Naive thymus-derived CD4-positive, alpha-beta T cell (primary cell): ENCODE measurements at regions of chr12 and their contacts with region 1.

Region 1: DNA sequence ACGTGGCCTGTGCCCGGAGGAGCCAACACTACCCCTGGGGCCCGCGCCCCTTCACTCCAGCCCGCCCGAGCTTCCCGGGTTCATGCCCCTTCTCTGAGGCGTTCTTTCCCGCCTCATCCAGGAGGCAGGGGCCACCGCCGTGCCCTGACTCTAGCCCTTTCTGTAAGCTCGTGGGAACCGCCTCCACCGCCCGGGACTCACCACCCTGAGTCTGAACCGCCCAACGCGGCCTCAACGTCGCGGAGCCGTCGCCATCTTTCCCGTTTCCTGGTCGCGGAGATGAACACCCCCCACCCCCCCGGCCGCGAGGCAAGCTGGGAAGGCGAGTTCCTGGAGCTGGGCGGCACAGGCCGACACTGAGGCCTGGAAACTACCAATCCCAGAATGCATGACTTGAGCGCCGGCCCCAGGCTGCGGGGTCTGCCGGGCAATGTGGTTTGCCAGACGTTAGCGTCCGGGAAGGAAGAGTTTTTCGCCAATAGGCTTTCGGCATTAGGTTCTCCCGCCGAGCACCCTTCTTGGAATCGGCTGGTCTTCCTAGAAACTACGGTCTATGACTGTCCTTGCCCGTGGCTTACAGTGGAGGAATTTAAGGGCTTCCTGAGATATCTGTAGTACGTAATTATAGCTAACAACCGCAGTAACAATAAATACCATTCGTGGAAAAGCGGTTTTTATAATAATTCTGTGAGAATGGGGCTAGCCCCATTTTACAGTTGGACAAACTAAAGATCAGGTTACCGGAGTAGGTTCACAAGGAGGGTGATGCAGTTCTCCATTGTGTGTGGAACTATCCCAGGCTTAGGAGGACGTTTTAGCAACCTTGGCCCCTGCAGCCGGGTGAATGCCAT is at the start of gene DDX23:
- DNase-seq: peak; percentile 73 to 93 (median 89)
- ATAC-seq: peak; percentile 98
- H3K4me3 ChIP-seq: peak within 1 kb of the TSS; percentile 96
- H3K4me3 Mint-ChIP-seq: peak within 1 kb of the TSS; percentile 89 to 99 (median 98)
- H3K27ac ChIP-seq: peak within 1 kb of the TSS; percentile 93
- H3K27ac Mint-ChIP-seq: peak within 1 kb of the TSS; percentile 89 to 100 (median 98)
- H3K4me1 ChIP-seq: peaks cover 18 to 24% of the 10 kb centered on the region in 2 donors
- H3K4me1 Mint-ChIP-seq: peaks cover 30 to 49% (median 43%) of the 10 kb centered on the region in 7 donors
- H3K27me3 ChIP-seq: no peaks in the 10 kb centered on the region
- H3K27me3 Mint-ChIP-seq: no peaks in the 10 kb centered on the region
- total RNA-seq, gene DDX23: 84.0 to 160 (median 127) TPM

Region 2: GRCh38 chr12:48631057-48631456 is 221.1 kb before region 1 on chr12:
- CTCF ChIA-PET with region 1: no interaction called
- POLR2A ChIA-PET with region 1: no interaction called
- intact Hi-C with region 1: no loop called
- DNase-seq: no peak
- ATAC-seq: no peak
- H3K4me3 ChIP-seq: no peak overlapping the region
- H3K4me3 Mint-ChIP-seq: no peak overlapping the region
- H3K27ac ChIP-seq: no peak overlapping the region
- H3K27ac Mint-ChIP-seq: no peak overlapping the region
- H3K4me1 ChIP-seq: no peaks in the 10 kb centered on the region
- H3K4me1 Mint-ChIP-seq: no peaks in the 10 kb centered on the region
- H3K27me3 ChIP-seq: no peaks in the 10 kb centered on the region
- H3K27me3 Mint-ChIP-seq: peaks cover 28 to 36% (median 29%) of the 10 kb centered on the region in 5 donors

Region 3: GRCh38 chr12:48681738-48682532 is 170.2 kb before region 1 on chr12 and contains the start of gene KANSL2:
- CTCF ChIA-PET with region 1: no interaction called
- POLR2A ChIA-PET with region 1: interaction called, 5 read pairs
- intact Hi-C with region 1: loop called (anchors 1 kb)
- DNase-seq: peak; percentile 79 to 98 (median 96)
- ATAC-seq: peak; percentile 97
- H3K4me3 ChIP-seq: peak within 1 kb of the TSS; percentile 88
- H3K4me3 Mint-ChIP-seq: peak within 1 kb of the TSS; percentile 93 to 99 (median 97)
- H3K27ac ChIP-seq: peak within 1 kb of the TSS; percentile 90
- H3K27ac Mint-ChIP-seq: peak within 1 kb of the TSS; percentile 97 to 99 (median 98)
- H3K4me1 ChIP-seq: peaks cover 30 to 38% of the 10 kb centered on the region in 2 donors
- H3K4me1 Mint-ChIP-seq: peaks cover 32 to 59% (median 53%) of the 10 kb centered on the region in 7 donors
- H3K27me3 ChIP-seq: no peaks in the 10 kb centered on the region
- H3K27me3 Mint-ChIP-seq: no peaks in the 10 kb centered on the region
- total RNA-seq, gene KANSL2: 37.5 to 117 (median 74.4) TPM

Region 4: GRCh38 chr12:48890657-48891418 is 38.7 kb after region 1 on chr12:
- CTCF ChIA-PET with region 1: interaction called, 78 read pairs
- POLR2A ChIA-PET with region 1: interaction called, 31 read pairs
- intact Hi-C with region 1: loop called (anchors 1 kb)
- DNase-seq: peak; percentile 51 to 79 (median 64)
- ATAC-seq: peak; percentile 97
- H3K4me3 ChIP-seq: no peak overlapping the region
- H3K4me3 Mint-ChIP-seq: peak overlapping the region in 4 of 10 donors; percentile 2 to 39 (median 16)
- H3K27ac ChIP-seq: no peak overlapping the region
- H3K27ac Mint-ChIP-seq: peak overlapping the region in 1 of 9 donors; percentile 65
- H3K4me1 ChIP-seq: peaks cover 8% of the 10 kb centered on the region in 2 donors
- H3K4me1 Mint-ChIP-seq: peaks cover 0 to 10% (median 0%) of the 10 kb centered on the region in 7 donors
- H3K27me3 ChIP-seq: peaks cover 0 to 4% of the 10 kb centered on the region in 2 donors
- H3K27me3 Mint-ChIP-seq: peaks cover 12 to 30% (median 15%) of the 10 kb centered on the region in 5 donors

Region 5: GRCh38 chr12:48936379-48936979 is 84.4 kb after region 1 on chr12:
- CTCF ChIA-PET with region 1: interaction called, 54 read pairs
- POLR2A ChIA-PET with region 1: interaction called, 15 read pairs
- intact Hi-C with region 1: loop called (anchors 1 kb)
- DNase-seq: peak; percentile 65 to 87 (median 77)
- ATAC-seq: peak; percentile 80
- H3K4me3 ChIP-seq: no peak overlapping the region
- H3K4me3 Mint-ChIP-seq: no peak overlapping the region
- H3K27ac ChIP-seq: no peak overlapping the region
- H3K27ac Mint-ChIP-seq: peak overlapping the region; percentile 1 to 85 (median 68)
- H3K4me1 ChIP-seq: peaks cover 6 to 34% of the 10 kb centered on the region in 2 donors
- H3K4me1 Mint-ChIP-seq: peaks cover 12 to 31% (median 16%) of the 10 kb centered on the region in 7 donors
- H3K27me3 ChIP-seq: no peaks in the 10 kb centered on the region
- H3K27me3 Mint-ChIP-seq: no peaks in the 10 kb centered on the region

Region 6: DNA sequence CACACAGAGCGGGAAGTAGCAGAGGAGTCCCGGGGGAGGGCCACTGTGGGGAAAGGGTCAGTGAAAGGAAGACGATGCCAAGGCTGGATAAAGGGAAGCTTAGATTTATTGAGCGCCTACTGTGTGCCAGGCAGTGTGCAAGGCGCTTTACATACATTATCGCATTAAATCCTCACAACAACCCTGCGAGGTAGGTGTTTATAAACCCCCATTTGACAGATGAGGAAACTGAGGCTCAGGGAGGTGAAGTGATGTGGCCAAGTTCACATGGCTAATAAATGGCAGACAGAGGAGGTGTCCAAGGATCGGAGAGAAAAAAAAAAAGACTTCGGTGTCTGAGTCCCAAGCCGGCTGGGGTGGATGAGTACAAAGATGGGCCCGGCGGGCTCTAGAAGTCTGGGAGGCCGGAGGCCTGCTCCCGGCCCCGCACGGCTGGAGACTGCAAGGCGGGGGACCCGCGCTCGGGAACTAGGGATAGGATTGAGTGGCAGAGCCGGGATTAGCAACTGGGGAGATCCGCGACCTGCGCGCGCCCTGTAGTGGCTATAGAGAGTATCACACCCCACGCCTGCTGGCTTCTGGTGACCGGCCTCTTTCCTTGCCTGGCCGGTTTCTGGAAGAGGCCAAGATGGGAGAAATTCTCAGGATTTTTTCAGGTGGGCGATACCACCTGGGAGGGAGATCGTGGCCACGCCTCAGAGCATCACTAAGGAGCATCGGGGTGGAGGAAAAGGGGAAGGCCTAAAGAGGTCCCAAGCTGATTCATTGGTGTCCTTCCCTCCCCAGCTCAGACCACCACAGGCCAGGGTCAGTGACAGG is 143.2 kb after region 1 on chr12:
- CTCF ChIA-PET with region 1: no interaction called
- POLR2A ChIA-PET with region 1: interaction called, 3 read pairs
- intact Hi-C with region 1: loop called in 1 of 2 experiments (anchors 1 kb)
- DNase-seq: peak in 3 of 9 donors; percentile 36 to 56 (median 54)
- ATAC-seq: peak; percentile 51
- H3K4me3 ChIP-seq: no peak overlapping the region
- H3K4me3 Mint-ChIP-seq: peak overlapping the region in 9 of 10 donors; percentile 15 to 81 (median 71)
- H3K27ac ChIP-seq: no peak overlapping the region
- H3K27ac Mint-ChIP-seq: peak overlapping the region in 2 of 9 donors; percentile 31 to 90
- H3K4me1 ChIP-seq: peaks cover 13 to 26% of the 10 kb centered on the region in 2 donors
- H3K4me1 Mint-ChIP-seq: peaks cover 24 to 39% (median 32%) of the 10 kb centered on the region in 7 donors
- H3K27me3 ChIP-seq: peaks cover 0 to 25% of the 10 kb centered on the region in 2 donors
- H3K27me3 Mint-ChIP-seq: peaks cover 48 to 75% (median 56%) of the 10 kb centered on the region in 5 donors

Region 7: DNA sequence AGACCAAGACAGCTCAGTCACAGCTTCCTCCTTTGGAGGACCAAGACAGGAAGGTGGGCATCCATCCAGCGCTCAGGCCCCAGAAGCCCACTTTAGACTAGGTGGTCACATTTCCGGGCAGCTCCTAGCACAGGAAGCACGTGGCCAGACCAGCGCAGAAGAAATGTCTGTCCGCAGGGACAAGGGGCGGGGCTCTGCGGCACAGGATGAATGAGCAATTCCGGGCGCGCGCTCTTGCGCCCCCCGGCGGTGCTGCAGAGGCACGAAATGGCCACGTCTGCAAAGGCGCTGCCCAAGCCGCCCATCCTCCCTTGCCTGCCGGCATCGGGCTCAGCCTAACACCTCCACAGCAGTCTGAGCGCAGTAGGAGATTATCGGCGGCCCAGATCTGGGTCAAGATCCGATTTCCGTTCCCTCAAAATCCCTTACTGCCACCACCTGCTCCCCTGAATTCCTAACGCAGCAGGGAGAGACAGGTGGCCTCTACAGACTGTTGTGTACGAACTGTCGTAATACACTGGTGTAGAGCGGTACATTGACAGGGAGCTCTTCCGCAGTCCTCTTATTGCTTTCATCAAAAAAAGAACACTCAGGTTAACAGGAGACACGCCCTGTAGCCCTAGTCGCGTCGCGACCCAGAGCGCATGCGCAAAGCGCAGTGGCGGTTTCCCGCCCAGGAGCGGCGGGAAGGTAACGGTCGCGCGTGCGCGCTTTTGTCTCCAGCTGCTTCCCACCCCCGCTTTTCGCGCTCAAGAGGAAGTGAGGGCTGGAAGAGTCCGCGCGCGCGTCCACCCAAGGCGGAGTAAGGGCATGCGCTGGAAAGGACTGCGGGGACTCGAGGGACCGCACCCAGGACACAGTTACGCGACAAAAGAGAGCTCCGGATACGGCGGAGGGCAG is 278.3 kb after region 1 on chr12:
- CTCF ChIA-PET with region 1: no interaction called
- POLR2A ChIA-PET with region 1: interaction called, 9 read pairs
- intact Hi-C with region 1: loop called (anchors 2 to 5 kb)
- DNase-seq: peak; percentile 87 to 95 (median 94)
- ATAC-seq: peak; percentile 77
- H3K4me3 ChIP-seq: peak overlapping the region; percentile 92
- H3K4me3 Mint-ChIP-seq: peak overlapping the region; percentile 95 to 99 (median 98)
- H3K27ac ChIP-seq: peak overlapping the region; percentile 95
- H3K27ac Mint-ChIP-seq: peak overlapping the region; percentile 97 to 99 (median 99)
- H3K4me1 ChIP-seq: peaks cover 24 to 27% of the 10 kb centered on the region in 2 donors
- H3K4me1 Mint-ChIP-seq: peaks cover 24 to 61% (median 55%) of the 10 kb centered on the region in 7 donors
- H3K27me3 ChIP-seq: no peaks in the 10 kb centered on the region
- H3K27me3 Mint-ChIP-seq: peaks cover 0 to 7% (median 0%) of the 10 kb centered on the region in 5 donors

Region 8: GRCh38 chr12:49707128-49707811 is 855.2 kb after region 1 on chr12 and contains the start of gene FMNL3:
- CTCF ChIA-PET with region 1: no interaction called
- POLR2A ChIA-PET with region 1: no interaction called
- intact Hi-C with region 1: no loop called
- DNase-seq: peak; percentile 97 to 100 (median 98)
- ATAC-seq: peak; percentile 97
- H3K4me3 ChIP-seq: peak within 1 kb of the TSS; percentile 78
- H3K4me3 Mint-ChIP-seq: peak within 1 kb of the TSS; percentile 78 to 96 (median 92)
- H3K27ac ChIP-seq: peak within 1 kb of the TSS; percentile 92
- H3K27ac Mint-ChIP-seq: peak within 1 kb of the TSS; percentile 72 to 94 (median 89)
- H3K4me1 ChIP-seq: peaks cover 11 to 32% of the 10 kb centered on the region in 2 donors
- H3K4me1 Mint-ChIP-seq: peaks cover 38 to 49% (median 46%) of the 10 kb centered on the region in 7 donors
- H3K27me3 ChIP-seq: no peaks in the 10 kb centered on the region
- H3K27me3 Mint-ChIP-seq: peaks cover 0 to 29% (median 0%) of the 10 kb centered on the region in 5 donors
- total RNA-seq, gene FMNL3: 33.3 to 40.4 (median 39.7) TPM

Region 9: DNA sequence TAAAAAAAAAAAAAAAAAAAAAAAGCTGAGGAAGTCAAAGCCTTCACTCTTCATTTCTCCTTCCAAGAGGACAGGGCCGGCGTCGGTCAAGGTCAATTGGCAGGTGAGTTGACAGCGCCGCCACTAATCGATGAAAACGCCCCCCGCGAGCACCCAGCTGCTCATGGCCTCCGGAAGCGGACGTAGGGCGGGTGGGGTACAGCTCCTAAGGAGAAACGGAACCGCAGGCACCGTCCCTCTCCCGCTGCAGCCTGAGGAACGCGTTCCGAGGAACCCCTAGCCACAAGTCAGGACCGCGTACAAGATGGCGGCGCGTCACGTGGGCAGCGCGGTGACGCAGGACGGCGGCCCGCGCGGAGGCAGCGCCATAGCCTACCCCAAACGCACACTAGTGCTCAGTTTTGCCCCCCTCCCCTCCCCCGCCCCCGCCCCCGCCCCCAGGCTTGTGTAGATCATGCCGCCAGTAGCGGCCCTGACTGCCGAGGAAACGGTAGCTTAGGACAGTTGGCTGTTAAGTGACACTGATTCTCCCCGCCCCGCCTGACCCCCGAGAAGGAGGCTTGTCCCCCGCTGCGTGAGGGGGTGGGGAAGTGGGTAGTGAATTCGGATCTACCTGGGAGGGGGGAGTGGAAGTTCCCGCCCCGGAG is 1911.7 kb after region 1 on chr12 and contains the start of gene ATF1:
- CTCF ChIA-PET with region 1: no interaction called
- POLR2A ChIA-PET with region 1: no interaction called
- intact Hi-C with region 1: loop called in 1 of 2 experiments (anchors 5 kb)
- DNase-seq: peak; percentile 78 to 92 (median 90)
- ATAC-seq: peak; percentile 90
- H3K4me3 ChIP-seq: peak within 1 kb of the TSS; percentile 69
- H3K4me3 Mint-ChIP-seq: peak within 1 kb of the TSS; percentile 89 to 97 (median 91)
- H3K27ac ChIP-seq: peak within 1 kb of the TSS; percentile 94
- H3K27ac Mint-ChIP-seq: peak within 1 kb of the TSS; percentile 92 to 99 (median 98)
- H3K4me1 ChIP-seq: peaks cover 12 to 14% of the 10 kb centered on the region in 2 donors
- H3K4me1 Mint-ChIP-seq: peaks cover 30 to 51% (median 45%) of the 10 kb centered on the region in 7 donors
- H3K27me3 ChIP-seq: no peaks in the 10 kb centered on the region
- H3K27me3 Mint-ChIP-seq: no peaks in the 10 kb centered on the region
- total RNA-seq, gene ATF1: 23.8 to 53.9 (median 51.3) TPM